AG04450 (cell line): ENCODE measurements at regions of chr3 and their contacts with region 1.

Region 1: DNA sequence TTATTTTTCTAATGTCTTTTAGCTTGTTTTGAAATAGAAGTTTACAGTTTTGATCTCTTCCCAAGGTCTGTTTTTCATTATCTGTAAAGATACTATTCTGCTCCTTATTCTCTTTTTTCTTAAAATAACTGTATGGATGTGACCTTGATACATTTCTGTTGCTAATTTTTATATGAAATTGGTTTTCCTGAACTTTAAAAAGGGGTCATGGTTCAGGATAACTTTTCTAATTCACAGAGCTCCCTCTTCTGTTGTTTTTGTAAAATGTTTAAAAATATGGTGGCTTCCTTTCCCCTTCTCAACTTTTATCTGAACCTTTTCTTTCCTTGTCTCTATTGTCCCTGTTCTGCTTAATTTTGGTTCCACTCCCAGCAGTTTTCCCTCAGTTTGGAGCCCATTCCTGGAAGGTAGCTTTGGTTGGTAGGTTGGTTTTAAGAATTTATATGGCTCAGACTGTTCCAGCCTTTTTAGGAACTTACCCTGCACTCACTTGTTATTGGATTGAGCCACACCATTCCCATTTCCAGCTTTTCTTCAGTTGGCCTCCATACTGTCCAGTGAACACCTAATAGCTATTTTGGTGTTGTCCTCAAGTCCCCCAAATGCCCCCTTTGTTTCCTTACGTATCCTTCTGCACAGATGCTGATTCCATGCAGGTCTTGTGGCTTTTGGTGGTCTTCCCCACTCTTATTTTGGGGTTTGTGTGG is 70.3 kb downstream of the SLMAP start:
- DNase-seq: no peak
- H3K4me3 ChIP-seq: no peak overlapping the region
- H3K27ac ChIP-seq: no peak overlapping the region
- H3K27me3 ChIP-seq: no peaks in the 10 kb centered on the region
- CTCF ChIP-seq: peak; percentile 33; the same call in 1 of the 2 replicates

Region 2: DNA sequence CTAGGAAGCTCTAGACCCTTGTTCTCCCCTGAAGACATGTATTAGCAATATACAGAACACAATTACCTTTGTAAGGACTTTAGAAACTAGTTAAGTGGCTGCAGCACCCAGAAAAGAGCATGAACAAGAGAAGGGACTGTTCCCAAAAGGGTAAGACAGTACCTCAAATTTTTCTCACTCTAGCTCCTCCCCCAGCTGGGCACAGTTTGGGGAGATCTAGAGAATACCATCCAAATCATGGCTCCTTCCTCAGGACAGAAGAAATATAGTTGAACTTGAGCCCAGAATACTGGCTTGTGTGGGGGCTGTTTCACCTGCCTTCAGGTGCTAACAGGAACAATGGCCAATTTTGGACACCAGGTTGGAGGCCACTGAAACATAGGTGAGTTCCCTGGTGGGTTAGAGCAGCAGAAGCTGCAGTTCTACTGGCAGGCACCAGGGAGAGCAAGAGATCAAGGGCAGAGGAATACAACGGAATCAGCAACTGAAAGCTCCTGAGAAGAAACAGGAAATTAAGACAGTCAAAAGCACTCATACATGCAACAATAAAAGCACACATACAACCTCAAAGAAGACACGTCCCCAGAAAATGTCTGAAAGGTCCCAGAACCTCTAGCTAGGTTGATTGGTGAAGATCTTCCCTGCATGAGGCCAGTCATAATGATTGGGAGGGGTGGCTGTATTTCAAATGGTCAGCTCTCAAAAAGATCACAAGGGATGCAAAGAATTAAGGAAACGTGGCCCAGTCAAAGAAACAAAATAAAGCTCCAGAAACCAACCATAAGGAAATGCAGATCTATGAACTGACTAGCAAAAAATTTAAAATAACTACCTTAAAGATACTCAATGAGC is 429.0 kb before region 1 on chr3:
- CTCF ChIA-PET with region 1: interaction called, 13 read pairs
- POLR2A ChIA-PET with region 1: no interaction called
- DNase-seq: no peak
- H3K4me3 ChIP-seq: no peak overlapping the region
- H3K27ac ChIP-seq: no peak overlapping the region
- H3K27me3 ChIP-seq: no peaks in the 10 kb centered on the region
- CTCF ChIP-seq: peak; percentile 93

Region 3: GRCh38 chr3:57787867-57788623 is 38.4 kb before region 1 on chr3:
- CTCF ChIA-PET with region 1: no interaction called
- POLR2A ChIA-PET with region 1: interaction called, 10 read pairs
- DNase-seq: no peak
- H3K4me3 ChIP-seq: no peak overlapping the region
- H3K27ac ChIP-seq: no peak overlapping the region
- H3K27me3 ChIP-seq: no peaks in the 10 kb centered on the region
- CTCF ChIP-seq: no peak